ENCODE measurements at regions of chr7 and their contacts with region 1.

Region 1: DNA sequence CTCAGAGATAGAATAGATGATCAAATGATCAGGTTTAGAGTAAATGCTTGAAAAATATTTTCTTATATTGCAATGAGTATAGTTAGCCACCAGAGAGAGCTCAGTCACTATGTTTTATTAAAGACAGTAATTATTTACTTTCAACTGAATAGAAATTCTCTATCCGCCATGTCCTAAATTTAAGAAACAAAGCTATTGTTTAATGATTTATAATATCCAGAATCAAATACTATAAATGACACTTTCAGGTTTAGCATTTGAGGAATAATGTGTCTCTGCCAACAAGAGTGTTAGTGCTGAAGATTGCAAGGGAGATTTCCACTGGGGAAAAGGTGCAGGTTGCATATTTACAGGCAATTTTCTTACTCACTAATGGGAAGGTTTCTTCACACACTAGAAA is 184.7 kb downstream of the DGKB start:
- DNase-seq: no peak
- CTCF ChIP-seq: peak; percentile 46

Region 2: GRCh38 chr7:14902589-14903067 is 184.8 kb after region 1 on chr7 and contains the start of gene DGKB:
- in situ Hi-C with region 1: no loop called
- DNase-seq: no peak
- CTCF ChIP-seq: no peak

Region 3: DNA sequence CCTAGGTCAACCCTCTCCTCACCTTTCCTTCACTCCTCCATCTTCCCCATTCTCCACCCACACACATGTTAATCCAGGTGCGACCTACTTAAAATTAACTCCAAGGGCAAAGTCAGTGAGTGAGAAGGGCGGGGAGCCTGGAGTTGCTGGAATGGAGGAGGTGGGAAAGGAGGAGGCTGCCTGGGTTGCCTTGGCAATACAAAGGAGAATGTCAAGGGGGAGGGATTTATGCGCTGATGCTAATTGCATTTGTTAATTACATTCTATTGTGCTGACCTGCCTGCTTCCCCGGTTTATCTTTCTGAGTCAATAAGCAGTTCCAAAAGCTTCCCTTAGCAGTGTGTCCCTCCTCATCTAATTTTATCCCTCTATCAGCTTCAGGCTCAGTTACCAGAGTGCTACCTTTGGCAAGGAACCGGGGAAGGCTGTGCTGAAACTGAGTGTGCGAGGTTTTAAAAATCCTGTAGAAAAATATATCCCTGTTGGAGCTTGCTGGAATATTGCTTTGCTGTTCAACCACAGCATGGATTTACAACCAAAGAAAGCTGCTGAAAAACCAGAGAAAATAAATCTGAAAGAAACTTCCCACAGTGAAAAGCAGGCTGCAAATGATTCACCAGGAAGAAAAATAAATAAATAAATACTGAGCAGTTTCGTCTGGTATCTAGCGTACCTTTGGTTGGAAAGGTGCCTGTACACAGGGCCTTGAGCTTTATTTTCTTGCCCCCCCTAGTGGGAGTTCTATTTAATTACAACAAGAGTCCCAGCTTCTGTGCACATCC is 297.9 kb after region 1 on chr7:
- in situ Hi-C with region 1: loop called (anchors 25 kb)
- DNase-seq: peak; percentile 7
- CTCF ChIP-seq: peak; percentile 66